ENCODE measurements at regions of chr19 and their contacts with region 1.

Region 1: GRCh38 chr19:45523642-45524256 is 16.5 kb downstream of the VASP start:
- DNase-seq: peak; percentile 42 to 90 (median 72)
- ATAC-seq: peak; percentile 99
- H3K4me3 ChIP-seq: no peak overlapping the region
- H3K4me3 Mint-ChIP-seq: no peak overlapping the region
- H3K27ac ChIP-seq: peak overlapping the region in 1 of 2 experiments; percentile 6
- H3K27ac Mint-ChIP-seq: peak overlapping the region; percentile 73
- H3K4me1 ChIP-seq: no peaks in the 10 kb centered on the region
- H3K4me1 Mint-ChIP-seq: peaks cover 11% of the 10 kb centered on the region
- H3K27me3 ChIP-seq: no peaks in the 10 kb centered on the region
- H3K27me3 Mint-ChIP-seq: no peaks in the 10 kb centered on the region
- CTCF ChIP-seq: peak; percentile 75

Region 2: GRCh38 chr19:45264781-45265317 is 258.9 kb before region 1 on chr19:
- CTCF ChIA-PET with region 1: no interaction called
- POLR2A ChIA-PET with region 1: no interaction called
- intact Hi-C with region 1: no loop called
- DNase-seq: no peak
- ATAC-seq: no peak
- H3K4me3 ChIP-seq: no peak overlapping the region
- H3K4me3 Mint-ChIP-seq: no peak overlapping the region
- H3K27ac ChIP-seq: no peak overlapping the region
- H3K27ac Mint-ChIP-seq: no peak overlapping the region
- H3K4me1 ChIP-seq: no peaks in the 10 kb centered on the region
- H3K4me1 Mint-ChIP-seq: no peaks in the 10 kb centered on the region
- H3K27me3 ChIP-seq: no peaks in the 10 kb centered on the region
- H3K27me3 Mint-ChIP-seq: no peaks in the 10 kb centered on the region
- CTCF ChIP-seq: no peak

Region 3: DNA sequence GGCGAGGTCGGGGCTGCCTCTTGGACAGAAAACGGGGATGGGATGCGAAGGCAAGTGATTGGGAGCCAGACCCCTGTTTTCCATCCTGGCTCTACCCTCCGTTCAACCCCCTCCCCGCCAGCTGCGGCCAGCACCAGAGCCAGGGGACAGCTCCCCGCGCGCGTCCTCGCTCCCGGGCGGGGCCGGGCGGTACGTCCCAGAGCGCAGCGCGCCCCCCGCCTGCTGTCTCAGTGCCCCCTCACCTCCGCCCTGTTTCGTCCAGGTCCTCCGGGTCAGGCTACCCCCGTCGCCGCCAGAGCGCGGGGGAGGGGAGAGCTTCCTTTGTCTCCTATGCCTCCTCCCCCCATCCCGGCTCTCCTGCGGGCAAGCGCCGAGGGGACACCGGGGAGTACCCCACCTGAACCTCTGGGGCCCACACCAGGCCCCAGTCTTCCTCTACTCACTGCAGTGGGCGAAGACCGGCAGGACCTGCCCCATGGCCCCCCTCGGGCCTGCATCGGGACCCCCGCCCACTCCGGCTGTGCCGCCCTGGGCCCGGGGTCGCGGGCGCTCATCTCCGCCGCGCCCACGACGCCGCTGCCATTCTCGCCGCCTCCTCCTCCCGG is 27.3 kb before region 1 on chr19:
- CTCF ChIA-PET with region 1: interaction called, 3 read pairs
- POLR2A ChIA-PET with region 1: no interaction called
- intact Hi-C with region 1: loop called in 1 of 2 experiments (anchors 1 kb)
- DNase-seq: peak in 6 of 9 experiments; percentile 37 to 68 (median 58)
- ATAC-seq: peak; percentile 16
- H3K4me3 ChIP-seq: peak overlapping the region; percentile 57 to 75
- H3K4me3 Mint-ChIP-seq: peak overlapping the region; percentile 74
- H3K27ac ChIP-seq: no peak overlapping the region
- H3K27ac Mint-ChIP-seq: no peak overlapping the region
- H3K4me1 ChIP-seq: peaks cover 45% of the 10 kb centered on the region
- H3K4me1 Mint-ChIP-seq: peaks cover 37% of the 10 kb centered on the region
- H3K27me3 ChIP-seq: peaks cover 0 to 4% of the 10 kb centered on the region in 2 experiments
- H3K27me3 Mint-ChIP-seq: peaks cover 21% of the 10 kb centered on the region
- CTCF ChIP-seq: no peak

Region 4: DNA sequence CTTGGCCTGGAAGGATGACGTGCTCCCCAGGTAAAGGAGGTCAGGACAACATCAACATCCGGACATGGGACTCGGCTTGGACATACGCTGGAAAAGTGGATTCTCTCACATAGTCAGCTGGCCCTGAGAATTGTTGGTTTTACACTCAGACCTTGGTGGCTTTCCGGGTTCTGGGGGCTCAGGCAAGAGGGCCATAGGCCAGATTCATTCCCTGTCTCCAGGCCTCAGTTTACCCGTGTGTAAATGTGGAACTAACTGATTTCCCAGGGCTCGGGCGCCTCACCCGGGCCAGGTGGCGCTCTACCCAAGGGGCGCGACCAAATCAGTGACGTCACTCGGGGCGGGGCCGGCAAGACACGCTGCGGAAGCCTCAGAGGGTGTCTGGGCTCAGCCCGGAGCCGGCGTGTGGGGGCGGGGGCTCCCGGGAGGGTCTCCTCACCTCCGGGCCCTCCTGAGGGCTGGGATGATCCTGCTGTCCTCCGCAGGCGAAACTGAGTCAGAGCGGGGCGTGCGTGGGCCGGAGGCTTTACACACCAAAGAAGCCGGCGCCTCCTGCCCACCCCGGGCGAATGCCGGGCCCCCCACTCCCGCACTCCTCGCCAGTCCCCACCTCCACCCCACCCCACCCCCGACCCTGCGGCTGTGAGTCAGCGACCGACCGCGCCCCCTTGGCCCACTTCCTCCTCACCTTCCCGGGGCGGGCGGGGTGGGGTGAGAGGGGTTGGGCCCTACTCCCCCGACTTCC is 17.3 kb before region 1 on chr19:
- CTCF ChIA-PET with region 1: interaction called, 3 read pairs
- POLR2A ChIA-PET with region 1: interaction called, 3 read pairs
- intact Hi-C with region 1: loop called (anchors 1 kb)
- DNase-seq: peak; percentile 93 to 99 (median 97)
- ATAC-seq: peak; percentile 79
- H3K4me3 ChIP-seq: peak overlapping the region; percentile 74 to 90
- H3K4me3 Mint-ChIP-seq: peak overlapping the region; percentile 88
- H3K27ac ChIP-seq: peak overlapping the region; percentile 85 to 91
- H3K27ac Mint-ChIP-seq: peak overlapping the region; percentile 93
- H3K4me1 ChIP-seq: peaks cover 33% of the 10 kb centered on the region
- H3K4me1 Mint-ChIP-seq: peaks cover 39% of the 10 kb centered on the region
- H3K27me3 ChIP-seq: no peaks in the 10 kb centered on the region
- H3K27me3 Mint-ChIP-seq: no peaks in the 10 kb centered on the region
- CTCF ChIP-seq: peak; percentile 32

Region 5: DNA sequence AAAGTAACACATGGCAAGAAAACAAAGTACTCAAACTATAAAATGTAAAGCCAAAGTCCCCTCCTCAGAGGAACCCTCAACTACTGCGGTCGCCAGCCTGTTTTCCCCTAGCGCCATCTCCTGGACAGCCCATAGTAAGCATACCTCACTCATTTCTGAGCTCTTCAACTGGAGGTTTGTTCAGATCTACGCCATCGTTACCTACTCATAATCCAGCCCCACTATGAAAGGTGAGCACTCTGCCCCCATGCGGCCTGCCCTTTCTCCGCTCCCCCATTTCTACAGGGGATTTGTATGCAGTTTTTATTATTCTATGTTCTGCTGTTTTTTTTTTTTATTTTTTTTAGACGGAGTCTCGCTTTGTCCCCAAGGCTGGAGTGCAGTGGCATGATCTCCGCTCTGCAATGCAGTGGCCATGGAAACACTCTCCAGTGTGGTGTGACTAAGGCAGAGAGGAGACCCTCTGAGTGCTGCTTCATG is 34.7 kb after region 1 on chr19:
- CTCF ChIA-PET with region 1: interaction called, 4 read pairs
- POLR2A ChIA-PET with region 1: no interaction called
- intact Hi-C with region 1: loop called (anchors 1 kb)
- DNase-seq: peak; percentile 32 to 89 (median 71)
- ATAC-seq: peak; percentile 99
- H3K4me3 ChIP-seq: no peak overlapping the region
- H3K4me3 Mint-ChIP-seq: no peak overlapping the region
- H3K27ac ChIP-seq: no peak overlapping the region
- H3K27ac Mint-ChIP-seq: no peak overlapping the region
- H3K4me1 ChIP-seq: peaks cover 42% of the 10 kb centered on the region
- H3K4me1 Mint-ChIP-seq: peaks cover 35% of the 10 kb centered on the region
- H3K27me3 ChIP-seq: no peaks in the 10 kb centered on the region
- H3K27me3 Mint-ChIP-seq: no peaks in the 10 kb centered on the region
- CTCF ChIP-seq: peak; percentile 79

Region 6: GRCh38 chr19:45569619-45570421 is 46.1 kb after region 1 on chr19:
- CTCF ChIA-PET with region 1: interaction called, 4 read pairs
- POLR2A ChIA-PET with region 1: no interaction called
- intact Hi-C with region 1: loop called (anchors 1 kb)
- DNase-seq: peak; percentile 19 to 74 (median 59)
- ATAC-seq: peak; percentile 72
- H3K4me3 ChIP-seq: no peak overlapping the region
- H3K4me3 Mint-ChIP-seq: no peak overlapping the region
- H3K27ac ChIP-seq: no peak overlapping the region
- H3K27ac Mint-ChIP-seq: no peak overlapping the region
- H3K4me1 ChIP-seq: peaks cover 12% of the 10 kb centered on the region
- H3K4me1 Mint-ChIP-seq: peaks cover 12% of the 10 kb centered on the region
- H3K27me3 ChIP-seq: no peaks in the 10 kb centered on the region
- H3K27me3 Mint-ChIP-seq: no peaks in the 10 kb centered on the region
- CTCF ChIP-seq: peak; percentile 57

Region 7: GRCh38 chr19:45681391-45682015 is 157.8 kb after region 1 on chr19:
- CTCF ChIA-PET with region 1: interaction called, 3 read pairs
- POLR2A ChIA-PET with region 1: no interaction called
- intact Hi-C with region 1: loop called in 1 of 2 experiments (anchors 1 kb)
- DNase-seq: peak; percentile 74 to 94 (median 85)
- ATAC-seq: peak; percentile 76
- H3K4me3 ChIP-seq: peak overlapping the region; percentile 34 to 50
- H3K4me3 Mint-ChIP-seq: peak overlapping the region; percentile 73
- H3K27ac ChIP-seq: no peak overlapping the region
- H3K27ac Mint-ChIP-seq: peak overlapping the region; percentile 49
- H3K4me1 ChIP-seq: peaks cover 17% of the 10 kb centered on the region
- H3K4me1 Mint-ChIP-seq: peaks cover 20% of the 10 kb centered on the region
- H3K27me3 ChIP-seq: peaks cover 0 to 4% of the 10 kb centered on the region in 2 experiments
- H3K27me3 Mint-ChIP-seq: no peaks in the 10 kb centered on the region
- CTCF ChIP-seq: peak; percentile 97

Measured in CD8-positive, alpha-beta T cell (primary cell).